ENCODE measurements at regions of chr18 and their contacts with region 1.

Region 1: GRCh38 chr18:48044944-48045343 is 114.5 kb upstream of the SMAD2 start:
- DNase-seq: no peak
- ATAC-seq: no peak
- H3K4me3 ChIP-seq: no peak overlapping the region
- H3K27ac ChIP-seq: no peak overlapping the region
- H3K4me1 ChIP-seq: no peaks in the 10 kb centered on the region
- H3K27me3 ChIP-seq: no peaks in the 10 kb centered on the region
- CTCF ChIP-seq: no peak

Region 2: GRCh38 chr18:48410095-48410920 is 365.4 kb after region 1 on chr18:
- CTCF ChIA-PET with region 1: interaction called, 19 read pairs
- POLR2A ChIA-PET with region 1: no interaction called
- intact Hi-C with region 1: no loop called
- DNase-seq: peak; percentile 67
- ATAC-seq: peak; percentile 97
- H3K4me3 ChIP-seq: peak overlapping the region; percentile 67
- H3K27ac ChIP-seq: no peak overlapping the region
- H3K4me1 ChIP-seq: 0 out of 2 replicates have a peak, but pooled peaks cover 4% of the 10 kb centered on the region
- H3K27me3 ChIP-seq: peaks cover 15% of the 10 kb centered on the region
- CTCF ChIP-seq: no peak

Measured in PC-3 (cell line).